CD8-positive, alpha-beta T cell (primary cell): ENCODE measurements at regions of chr4 and their contacts with region 1.

Region 1: DNA sequence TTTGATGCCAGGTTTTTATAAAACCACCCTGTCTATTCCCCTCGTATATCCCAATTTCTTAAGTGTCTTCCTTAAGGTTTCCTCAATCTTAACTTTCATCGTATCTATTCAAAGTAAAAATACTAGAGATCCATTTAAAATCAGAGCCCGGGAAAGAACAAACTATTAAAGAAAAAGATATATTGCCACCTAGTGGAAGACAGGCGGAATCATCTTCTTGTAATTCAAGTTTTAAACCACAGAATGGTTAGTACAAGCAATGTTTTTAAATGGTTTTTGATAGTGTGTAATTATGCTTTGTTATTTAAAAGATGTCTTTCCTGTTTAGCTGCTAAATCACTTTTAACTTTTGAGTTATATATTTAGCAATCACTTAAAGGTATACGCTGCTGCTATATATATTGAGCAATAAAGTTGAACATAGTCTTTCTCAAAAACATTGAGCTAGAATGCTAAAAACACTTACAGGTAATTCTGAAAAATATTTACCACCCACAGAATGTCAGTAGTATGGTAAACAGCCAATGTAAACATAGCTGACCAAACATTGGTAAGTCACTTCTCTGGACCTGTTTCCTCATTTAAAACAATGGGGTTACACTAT is 18.2 kb downstream of the PRDM8 start:
- DNase-seq: peak in 2 of 9 experiments; percentile 28 to 56
- ATAC-seq: no peak
- H3K4me3 ChIP-seq: no peak overlapping the region
- H3K4me3 Mint-ChIP-seq: no peak overlapping the region
- H3K27ac ChIP-seq: no peak overlapping the region
- H3K27ac Mint-ChIP-seq: no peak overlapping the region
- H3K4me1 ChIP-seq: no peaks in the 10 kb centered on the region
- H3K4me1 Mint-ChIP-seq: peaks cover 1% of the 10 kb centered on the region
- H3K27me3 ChIP-seq: no peaks in the 10 kb centered on the region
- H3K27me3 Mint-ChIP-seq: peaks cover 25% of the 10 kb centered on the region
- CTCF ChIP-seq: peak; percentile 91

Region 2: DNA sequence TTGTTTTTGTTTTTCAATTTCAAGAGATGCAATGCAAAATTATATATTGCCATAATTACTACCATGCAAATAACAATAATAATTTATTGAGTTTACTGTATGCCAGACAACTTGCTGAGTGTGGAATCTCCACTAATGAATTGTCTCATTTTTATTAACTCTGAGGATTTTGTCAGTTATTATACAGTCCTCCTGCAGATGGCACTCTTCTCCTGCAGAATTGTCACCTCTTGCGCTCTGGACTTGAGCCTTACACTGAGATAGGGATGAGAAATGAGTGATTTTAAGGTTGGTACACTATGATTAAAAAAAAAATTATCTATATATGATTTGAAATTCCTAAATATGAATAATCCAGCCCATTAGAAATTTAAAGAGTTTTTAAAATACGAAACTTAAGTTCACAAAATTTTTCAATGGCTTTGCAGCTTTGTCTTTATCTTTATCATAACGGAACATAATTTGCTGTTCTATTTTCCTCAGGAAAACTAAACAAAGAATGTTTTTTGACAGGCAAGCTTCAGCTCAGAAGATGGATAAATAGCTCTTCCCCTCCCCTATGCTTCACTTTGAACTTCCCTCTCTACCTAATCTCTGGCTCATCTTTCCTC is 1263.6 kb before region 1 on chr4:
- CTCF ChIA-PET with region 1: interaction called, 16 read pairs
- POLR2A ChIA-PET with region 1: interaction called, 3 read pairs
- intact Hi-C with region 1: loop called (anchors 1 kb)
- DNase-seq: peak in 4 of 9 experiments; percentile 23 to 64 (median 42)
- ATAC-seq: peak; percentile 59
- H3K4me3 ChIP-seq: no peak overlapping the region
- H3K4me3 Mint-ChIP-seq: no peak overlapping the region
- H3K27ac ChIP-seq: no peak overlapping the region
- H3K27ac Mint-ChIP-seq: no peak overlapping the region
- H3K4me1 ChIP-seq: no peaks in the 10 kb centered on the region
- H3K4me1 Mint-ChIP-seq: no peaks in the 10 kb centered on the region
- H3K27me3 ChIP-seq: no peaks in the 10 kb centered on the region
- H3K27me3 Mint-ChIP-seq: peaks cover 13% of the 10 kb centered on the region
- CTCF ChIP-seq: peak; percentile 88

Region 3: GRCh38 chr4:79917246-79917645 is 298.3 kb before region 1 on chr4:
- CTCF ChIA-PET with region 1: interaction called, 7 read pairs
- POLR2A ChIA-PET with region 1: no interaction called
- intact Hi-C with region 1: loop called (anchors 1 to 2 kb)
- DNase-seq: peak; percentile 3 to 63 (median 43)
- ATAC-seq: peak; percentile 42
- H3K4me3 ChIP-seq: no peak overlapping the region
- H3K4me3 Mint-ChIP-seq: no peak overlapping the region
- H3K27ac ChIP-seq: no peak overlapping the region
- H3K27ac Mint-ChIP-seq: no peak overlapping the region
- H3K4me1 ChIP-seq: peaks cover 3% of the 10 kb centered on the region
- H3K4me1 Mint-ChIP-seq: peaks cover 4% of the 10 kb centered on the region
- H3K27me3 ChIP-seq: no peaks in the 10 kb centered on the region
- H3K27me3 Mint-ChIP-seq: no peaks in the 10 kb centered on the region
- CTCF ChIP-seq: peak; percentile 51

Region 4: DNA sequence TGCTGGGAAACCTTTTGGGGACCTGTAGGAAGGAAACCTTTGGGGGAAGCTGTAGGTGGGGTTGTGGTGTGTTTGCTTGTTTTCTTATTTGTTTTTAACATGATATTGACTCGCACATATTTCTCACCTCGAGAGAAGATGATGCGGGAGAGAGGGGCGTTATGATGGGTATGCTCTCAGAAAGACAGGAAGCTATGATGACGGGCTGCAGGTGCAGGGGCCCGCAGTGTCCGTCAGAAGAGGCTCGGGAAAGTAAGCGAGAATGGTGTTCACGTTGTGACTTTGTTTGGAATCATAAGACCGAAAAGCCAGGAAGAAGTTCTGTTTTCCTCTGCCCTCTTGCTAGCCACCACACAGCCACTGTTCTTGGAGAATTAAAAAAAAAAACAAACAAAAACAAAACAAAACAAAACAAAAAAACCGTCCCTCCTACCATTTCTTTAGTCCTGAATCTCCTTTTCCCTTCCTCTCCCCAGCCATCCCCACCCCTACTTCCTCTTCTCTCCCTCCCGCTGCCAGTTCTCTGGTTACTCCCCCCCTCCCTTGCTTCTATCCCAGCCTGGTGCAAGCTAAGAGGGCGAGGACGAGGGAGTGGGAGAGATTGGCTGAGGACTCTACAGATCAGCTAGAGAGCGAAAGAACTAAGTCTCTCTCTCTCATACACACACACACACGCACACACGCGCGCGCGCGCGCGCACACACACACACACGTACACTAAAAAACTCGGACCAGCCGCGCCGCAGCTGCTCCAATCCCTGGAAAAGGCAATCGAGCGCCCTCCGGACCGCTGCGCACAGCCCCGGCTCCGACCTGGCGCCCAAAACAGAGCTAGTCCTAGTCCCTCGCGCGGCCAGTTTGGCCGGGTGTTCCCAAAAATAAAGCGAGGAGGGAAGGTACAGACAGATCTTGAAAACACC is 814.8 kb after region 1 on chr4 and contains the start of gene BMP3:
- CTCF ChIA-PET with region 1: no interaction called
- POLR2A ChIA-PET with region 1: no interaction called
- intact Hi-C with region 1: loop called in 1 of 2 experiments (anchors 10 kb)
- DNase-seq: peak in 1 of 9 experiments; percentile 2
- ATAC-seq: no peak
- H3K4me3 ChIP-seq: peak within 1 kb of the TSS in 1 of 2 experiments; percentile 42
- H3K4me3 Mint-ChIP-seq: peak within 1 kb of the TSS; percentile 77
- H3K27ac ChIP-seq: no peak within 1 kb of the TSS
- H3K27ac Mint-ChIP-seq: no peak within 1 kb of the TSS
- H3K4me1 ChIP-seq: peaks cover 15% of the 10 kb centered on the region
- H3K4me1 Mint-ChIP-seq: peaks cover 14% of the 10 kb centered on the region
- H3K27me3 ChIP-seq: peaks cover 20 to 24% of the 10 kb centered on the region in 2 experiments
- H3K27me3 Mint-ChIP-seq: peaks cover 62% of the 10 kb centered on the region
- CTCF ChIP-seq: no peak
- total RNA-seq, gene BMP3: not detected